Sigmoid colon (tissue), 7 donors: ENCODE measurements at regions of chr1 and their contacts with region 1.

Region 1: DNA sequence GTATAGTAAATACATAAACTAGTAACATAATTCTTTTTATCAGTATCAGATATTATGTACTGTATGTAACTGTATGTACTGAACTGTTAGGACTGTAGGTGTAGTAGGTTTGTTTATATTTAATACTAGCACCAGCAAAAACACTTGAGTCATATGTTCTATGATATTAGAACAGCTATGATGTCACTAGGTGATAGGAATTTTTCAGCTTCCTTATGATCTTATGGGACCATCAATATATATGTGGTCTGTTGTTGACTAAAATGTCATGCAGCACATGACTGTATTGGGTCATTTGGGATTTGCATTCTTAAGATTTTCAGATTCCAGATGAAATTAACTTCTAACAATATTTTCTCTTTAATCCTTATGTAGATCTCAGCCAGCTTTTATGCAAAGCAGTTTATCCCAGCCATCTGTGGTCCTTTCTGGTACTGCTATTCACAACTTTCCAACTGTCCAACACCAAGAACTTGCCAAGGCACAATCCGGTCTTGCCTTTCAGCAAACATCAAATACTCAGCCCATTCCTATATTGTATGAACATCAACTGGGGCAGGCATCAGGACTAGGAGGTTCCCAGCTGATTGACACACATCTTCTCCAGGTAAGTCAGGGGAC is 38.4 kb upstream of the MYOCOS start:
- DNase-seq: no peak
- H3K4me3 ChIP-seq: no peak overlapping the region
- H3K27ac ChIP-seq: no peak overlapping the region
- H3K4me1 ChIP-seq: no peaks in the 10 kb centered on the region
- H3K27me3 ChIP-seq: no peaks in the 10 kb centered on the region
- CTCF ChIP-seq: no peak
- EP300 ChIP-seq: no peak
- POLR2A ChIP-seq: no peak

Region 2: DNA sequence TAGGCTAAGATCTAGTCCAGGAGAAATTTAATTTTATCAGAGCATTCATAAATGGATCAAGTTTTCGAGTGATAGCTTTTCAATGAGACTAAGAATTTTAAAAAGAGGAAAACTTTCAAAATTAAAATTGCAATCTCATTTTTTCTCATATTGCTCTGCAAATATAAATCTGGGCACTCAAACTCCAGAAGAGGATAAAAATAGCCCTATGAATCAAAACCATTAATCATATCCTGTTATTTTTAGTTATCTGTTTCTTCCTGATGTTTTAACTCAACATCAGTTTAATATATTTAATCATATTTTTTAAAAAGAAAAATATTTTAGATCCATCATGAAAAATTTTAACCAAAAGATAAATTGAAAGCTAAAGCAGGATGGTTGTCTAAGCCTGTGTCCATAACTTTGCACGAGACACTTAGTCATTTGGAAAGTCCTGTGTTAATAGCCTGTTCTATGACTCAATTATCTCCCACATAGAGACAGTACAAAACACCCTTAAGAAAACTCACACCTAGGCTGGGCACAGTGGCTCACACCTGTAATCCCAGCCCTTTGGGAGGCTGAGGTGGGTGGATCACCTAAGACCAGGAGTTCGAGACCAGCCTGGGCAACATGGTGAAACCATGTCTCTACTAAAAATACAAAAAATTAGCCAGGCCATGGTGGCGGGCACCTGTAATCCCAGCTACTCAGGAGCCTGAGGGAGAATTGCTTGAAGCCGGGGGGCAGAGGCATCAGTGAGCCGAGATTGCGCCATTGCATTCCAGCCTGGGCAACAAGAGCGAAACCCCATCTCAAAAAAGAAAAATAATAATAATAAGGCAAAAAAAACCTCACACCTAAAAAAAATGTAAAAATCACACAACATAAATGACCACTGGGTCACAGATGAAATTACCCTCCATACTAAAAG is 115.3 kb before region 1 on chr1:
- intact Hi-C with region 1: no loop called
- DNase-seq: no peak
- H3K4me3 ChIP-seq: no peak overlapping the region
- H3K27ac ChIP-seq: no peak overlapping the region
- H3K4me1 ChIP-seq: no peaks in the 10 kb centered on the region
- H3K27me3 ChIP-seq: no peaks in the 10 kb centered on the region
- CTCF ChIP-seq: no peak
- EP300 ChIP-seq: no peak
- POLR2A ChIP-seq: no peak

Region 3: GRCh38 chr1:171530676-171531075 is 53.0 kb before region 1 on chr1:
- intact Hi-C with region 1: loop called (anchors 5 kb)
- DNase-seq: no peak
- H3K4me3 ChIP-seq: no peak overlapping the region
- H3K27ac ChIP-seq: no peak overlapping the region
- H3K4me1 ChIP-seq: no peaks in the 10 kb centered on the region
- H3K27me3 ChIP-seq: no peaks in the 10 kb centered on the region
- CTCF ChIP-seq: no peak
- EP300 ChIP-seq: no peak
- POLR2A ChIP-seq: no peak